Activated T-helper 2 cell treated with anti-CD3 and anti-CD28 coated beads, Interferon-gamma antibody, Interleukin-2, Interleukin-4, amounts not matched to agents 10 μg/mL and 5 μg/mL and 100 μg/mL, durations not matched to agents 14 hours and 24 hours and 36 hours (primary cell): ENCODE measurements at regions of chr9 and their contacts with region 1.

Region 1: DNA sequence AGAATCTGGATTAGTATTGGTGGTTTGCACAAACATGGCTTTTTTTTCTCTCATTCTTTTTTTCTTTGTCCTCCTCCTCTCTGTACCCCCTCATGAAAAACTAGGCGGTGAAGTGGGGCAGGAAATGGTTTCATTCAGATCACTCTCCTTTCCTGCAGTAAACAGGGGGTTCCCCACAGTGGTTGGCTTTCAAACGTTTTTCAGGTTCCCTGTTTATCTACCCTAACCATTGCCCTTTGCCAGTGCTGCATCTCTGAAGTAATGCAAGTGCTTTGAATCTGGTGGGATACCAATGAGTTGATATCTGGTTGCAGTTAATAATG is 29.8 kb downstream of the NR4A3 start:
- DNase-seq: peak; percentile 65
- H3K4me3 Mint-ChIP-seq: no peak overlapping the region
- H3K27ac Mint-ChIP-seq: peak overlapping the region; percentile 81
- H3K4me1 Mint-ChIP-seq: peaks cover 68% of the 10 kb centered on the region
- H3K27me3 Mint-ChIP-seq: no peaks in the 10 kb centered on the region

Region 2: DNA sequence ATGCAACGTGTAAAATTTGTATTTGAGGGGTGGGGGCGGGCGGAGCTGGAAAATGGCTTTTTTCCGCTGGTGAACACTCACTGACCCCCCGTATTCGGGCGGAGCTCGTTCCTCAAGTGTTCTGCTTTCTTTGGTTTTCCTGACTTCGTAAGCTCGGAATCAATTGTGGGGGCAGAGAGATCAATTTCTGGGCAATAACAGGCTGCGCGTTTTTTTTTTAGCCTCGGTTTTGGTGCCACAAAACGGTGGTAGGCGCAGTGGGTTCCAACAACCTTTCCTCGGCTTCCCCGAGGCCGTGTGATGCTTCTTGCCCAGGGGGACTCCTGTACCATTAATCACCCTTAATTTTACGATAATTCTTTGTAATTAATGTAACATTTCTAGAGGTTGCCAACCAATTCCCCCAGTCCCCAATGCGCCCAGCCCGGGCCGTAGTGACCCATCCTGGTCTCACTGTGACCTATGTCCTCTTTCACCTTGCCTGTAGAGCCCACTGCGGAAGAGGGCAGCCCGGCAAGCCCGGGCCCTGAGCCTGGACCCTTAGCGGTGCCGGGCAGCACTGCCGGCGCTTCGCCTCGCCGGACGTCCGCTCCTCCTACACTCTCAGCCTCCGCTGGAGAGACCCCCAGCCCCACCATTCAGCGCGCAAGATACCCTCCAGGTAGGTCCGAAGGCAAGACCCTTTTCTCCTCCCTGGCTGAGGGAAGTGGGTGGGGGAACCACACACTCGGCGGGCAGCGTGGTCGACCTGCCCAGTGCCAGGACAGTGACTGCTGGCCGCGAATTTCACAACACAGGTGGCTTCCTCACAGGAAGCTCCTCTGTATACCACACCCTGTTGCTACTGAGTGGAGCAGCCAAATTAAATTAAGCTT is 26.1 kb before region 1 on chr9:
- intact Hi-C with region 1: loop called (anchors 2 kb)
- DNase-seq: no peak
- H3K4me3 Mint-ChIP-seq: peak overlapping the region; percentile 100
- H3K27ac Mint-ChIP-seq: peak overlapping the region; percentile 87
- H3K4me1 Mint-ChIP-seq: peaks cover 45% of the 10 kb centered on the region
- H3K27me3 Mint-ChIP-seq: peaks cover 6% of the 10 kb centered on the region

Region 3: GRCh38 chr9:99840072-99840471 is 11.4 kb before region 1 on chr9:
- intact Hi-C with region 1: no loop called
- DNase-seq: no peak
- H3K4me3 Mint-ChIP-seq: no peak overlapping the region
- H3K27ac Mint-ChIP-seq: no peak overlapping the region
- H3K4me1 Mint-ChIP-seq: peaks cover 25% of the 10 kb centered on the region
- H3K27me3 Mint-ChIP-seq: no peaks in the 10 kb centered on the region

Region 4: DNA sequence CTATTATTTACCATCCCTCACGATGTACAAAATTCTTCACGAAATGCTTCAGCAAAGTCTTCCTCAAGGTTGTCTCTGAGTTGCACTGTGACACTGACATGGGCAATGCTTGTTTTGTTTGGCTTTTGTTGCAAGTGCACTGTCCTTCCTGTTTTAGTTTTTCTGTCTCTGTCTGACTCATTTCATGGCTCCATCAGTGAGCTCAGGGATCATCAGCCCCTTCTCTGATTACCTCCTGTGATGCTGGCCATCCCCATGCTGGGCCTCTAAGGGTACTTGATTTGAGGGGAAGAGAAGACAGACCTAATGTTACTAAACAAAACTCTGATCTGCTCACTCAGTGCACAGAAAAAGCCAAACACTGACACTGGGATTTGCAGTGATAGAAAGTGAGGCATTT is 17.4 kb after region 1 on chr9:
- intact Hi-C with region 1: loop called (anchors 2 kb)
- DNase-seq: no peak
- H3K4me3 Mint-ChIP-seq: peak overlapping the region; percentile 11
- H3K27ac Mint-ChIP-seq: peak overlapping the region; percentile 51
- H3K4me1 Mint-ChIP-seq: peaks cover 51% of the 10 kb centered on the region
- H3K27me3 Mint-ChIP-seq: no peaks in the 10 kb centered on the region

Region 5: DNA sequence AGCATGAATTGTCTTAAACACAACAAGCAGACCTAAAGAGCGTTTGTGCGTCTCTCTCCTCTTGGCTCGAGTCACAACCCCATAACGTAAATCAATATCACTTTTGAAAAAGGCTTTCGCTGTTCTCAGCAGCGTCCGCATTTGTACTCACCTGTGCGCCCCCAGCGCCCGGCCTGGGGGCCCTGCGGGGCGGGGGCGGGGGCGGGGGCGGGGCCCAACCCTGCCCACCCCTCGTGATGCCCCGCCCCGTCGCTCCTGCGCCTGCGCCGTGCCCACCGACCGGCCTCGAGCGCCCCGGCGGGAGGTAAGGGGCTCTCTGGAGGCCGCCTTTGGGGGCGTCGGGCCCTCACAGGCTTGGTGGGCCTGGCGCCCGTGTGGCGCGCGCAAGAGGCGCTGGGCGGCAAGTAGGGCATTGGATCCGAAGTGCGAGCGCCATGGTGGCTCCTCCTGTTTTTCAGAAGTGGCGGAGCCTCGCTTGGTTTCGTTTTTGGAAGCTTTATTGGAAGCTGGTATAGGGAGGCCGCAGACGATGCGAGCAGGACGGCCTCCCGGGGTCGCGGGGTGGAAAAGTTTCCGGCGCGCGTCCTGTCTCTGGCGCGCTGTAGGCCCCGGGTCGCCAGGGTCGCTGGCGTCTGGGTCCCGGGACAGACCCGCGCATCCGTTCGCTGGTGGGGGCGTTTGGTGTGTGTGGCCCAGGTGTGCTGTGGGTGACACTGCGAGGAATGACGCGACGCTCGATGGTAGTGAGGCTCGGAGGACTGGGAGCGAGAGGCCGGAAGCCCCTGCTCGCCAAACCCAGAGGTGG is 55.1 kb after region 1 on chr9 and contains the start of gene STX17:
- intact Hi-C with region 1: loop called (anchors 2 kb)
- DNase-seq: peak; percentile 76
- H3K4me3 Mint-ChIP-seq: peak within 1 kb of the TSS; percentile 94
- H3K27ac Mint-ChIP-seq: peak within 1 kb of the TSS; percentile 90
- H3K4me1 Mint-ChIP-seq: peaks cover 28% of the 10 kb centered on the region
- H3K27me3 Mint-ChIP-seq: peaks cover 17% of the 10 kb centered on the region
- total RNA-seq, gene STX17: 27.6 and 27.9 TPM in 2 replicates